ENCODE measurements at regions of chr16 and their contacts with region 1.

Region 1: DNA sequence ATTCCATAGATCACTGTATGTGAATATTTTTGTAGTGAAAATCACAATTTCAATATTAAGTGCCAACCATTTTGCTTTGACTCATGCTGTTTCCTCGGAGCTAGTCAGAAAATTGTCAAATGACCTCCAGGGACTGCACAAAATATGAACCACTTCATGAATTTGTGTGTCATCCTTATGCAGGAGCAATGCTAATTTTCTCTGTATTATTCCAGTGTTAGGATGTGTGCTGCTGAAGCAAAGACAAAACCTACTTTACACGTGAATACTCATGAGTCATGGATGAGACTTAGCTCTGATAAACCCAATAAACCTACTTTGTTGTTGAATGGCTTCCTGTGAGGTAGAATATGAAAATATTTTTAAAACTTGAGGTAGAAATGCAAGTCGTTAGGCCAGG is 65.2 kb downstream of the SHCBP1 start:
- DNase-seq: no peak
- ATAC-seq: no peak
- H3K4me3 Mint-ChIP-seq: no peak overlapping the region
- H3K27ac Mint-ChIP-seq: no peak overlapping the region
- H3K4me1 Mint-ChIP-seq: no peaks in the 10 kb centered on the region
- H3K27me3 Mint-ChIP-seq: peaks cover 7% of the 10 kb centered on the region

Region 2: DNA sequence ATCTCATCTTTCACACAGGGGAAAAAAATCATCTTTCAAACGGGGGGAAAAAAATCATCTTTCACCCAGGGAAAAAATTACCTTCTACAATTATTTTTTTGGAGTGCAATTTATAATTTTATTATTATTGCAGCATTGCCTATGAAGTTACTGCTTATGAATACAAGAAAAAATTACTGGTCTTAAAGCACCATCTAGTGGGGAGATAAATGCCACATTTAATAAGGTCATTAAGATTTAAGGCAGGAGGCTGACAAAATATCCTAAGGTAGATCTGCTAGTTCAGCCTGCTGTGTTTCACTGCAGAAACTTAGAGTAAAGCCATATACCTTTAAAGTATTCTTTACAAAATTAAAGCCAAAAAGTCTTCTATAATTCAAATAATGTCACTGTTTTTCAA is 51.6 kb after region 1 on chr16:
- CTCF ChIA-PET with region 1: interaction called, 4 read pairs
- POLR2A ChIA-PET with region 1: no interaction called
- intact Hi-C with region 1: loop called in 1 of 2 experiments (anchors 2 kb)
- DNase-seq: no peak
- ATAC-seq: no peak
- H3K4me3 Mint-ChIP-seq: no peak overlapping the region
- H3K27ac Mint-ChIP-seq: no peak overlapping the region
- H3K4me1 Mint-ChIP-seq: no peaks in the 10 kb centered on the region
- H3K27me3 Mint-ChIP-seq: no peaks in the 10 kb centered on the region

Region 3: DNA sequence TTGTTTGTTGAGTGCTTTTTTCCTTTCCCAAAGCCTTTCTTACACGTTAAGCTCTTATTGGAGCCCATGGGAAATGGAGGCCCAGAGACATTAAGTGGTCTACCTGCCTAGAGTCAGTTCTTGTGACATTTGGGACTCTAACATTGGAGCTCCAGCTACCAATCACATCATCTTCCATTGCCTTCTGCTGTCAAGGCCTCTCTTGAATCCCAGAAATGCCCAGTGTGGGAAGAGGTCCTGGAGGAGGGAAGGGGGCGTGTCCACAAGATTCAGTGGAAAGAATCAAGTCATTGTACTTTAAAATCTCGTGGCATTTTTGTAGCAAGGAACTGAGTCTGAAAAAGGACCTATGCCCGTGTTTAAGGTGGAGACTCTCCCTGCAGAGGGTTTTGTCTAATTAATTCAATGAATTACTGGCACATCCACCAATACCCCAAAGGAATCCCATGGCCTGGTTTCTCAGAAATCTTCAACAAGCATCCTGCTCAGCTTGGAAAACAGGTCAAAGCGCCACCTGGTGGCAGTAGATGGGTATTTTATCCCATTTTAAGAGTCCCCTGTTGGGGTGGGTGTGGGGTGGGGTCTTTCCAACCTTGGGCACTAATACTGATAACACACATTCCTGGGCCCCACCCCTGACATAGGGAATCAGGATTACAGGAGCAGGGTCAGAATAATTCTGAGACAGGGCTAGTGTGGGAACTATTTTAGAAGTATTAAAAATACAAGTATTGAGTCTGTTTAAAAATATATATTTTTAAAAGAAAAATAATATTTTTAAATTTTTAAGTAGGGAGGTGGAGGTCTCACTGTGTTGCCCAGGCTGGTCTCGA is 352.8 kb after region 1 on chr16:
- CTCF ChIA-PET with region 1: interaction called, 5 read pairs
- POLR2A ChIA-PET with region 1: no interaction called
- intact Hi-C with region 1: loop called in 1 of 2 experiments (anchors 5 kb)
- DNase-seq: peak; percentile 77
- ATAC-seq: peak; percentile 36
- H3K4me3 Mint-ChIP-seq: no peak overlapping the region
- H3K27ac Mint-ChIP-seq: no peak overlapping the region
- H3K4me1 Mint-ChIP-seq: peaks cover 5% of the 10 kb centered on the region
- H3K27me3 Mint-ChIP-seq: no peaks in the 10 kb centered on the region

Region 4: GRCh38 chr16:46929378-46930332 is 373.7 kb after region 1 on chr16:
- CTCF ChIA-PET with region 1: interaction called, 3 read pairs
- POLR2A ChIA-PET with region 1: no interaction called
- intact Hi-C with region 1: loop called in 1 of 2 experiments (anchors 5 kb)
- DNase-seq: peak; percentile 82
- ATAC-seq: peak; percentile 87
- H3K4me3 Mint-ChIP-seq: no peak overlapping the region
- H3K27ac Mint-ChIP-seq: no peak overlapping the region
- H3K4me1 Mint-ChIP-seq: peaks cover 4% of the 10 kb centered on the region
- H3K27me3 Mint-ChIP-seq: no peaks in the 10 kb centered on the region

Measured in activated CD4-positive, alpha-beta T cell treated with anti-CD3 and anti-CD28 coated beads for 36 hours (primary cell).